ENCODE measurements at regions of chr12 and their contacts with region 1.

Region 1: GRCh38 chr12:95918194-95918993 is 24.0 kb downstream of the CCDC38 start:
- DNase-seq: peak in 3 of 6 donors; percentile 26 to 48 (median 28)
- ATAC-seq: peak; percentile 53 to 95 (median 92)
- H3K4me3 ChIP-seq: no peak overlapping the region
- H3K27ac ChIP-seq: no peak overlapping the region
- H3K4me1 ChIP-seq: no peaks in the 10 kb centered on the region
- H3K27me3 ChIP-seq: no peaks in the 10 kb centered on the region
- CTCF ChIP-seq: peak; percentile 57 to 80 (median 73)

Region 2: DNA sequence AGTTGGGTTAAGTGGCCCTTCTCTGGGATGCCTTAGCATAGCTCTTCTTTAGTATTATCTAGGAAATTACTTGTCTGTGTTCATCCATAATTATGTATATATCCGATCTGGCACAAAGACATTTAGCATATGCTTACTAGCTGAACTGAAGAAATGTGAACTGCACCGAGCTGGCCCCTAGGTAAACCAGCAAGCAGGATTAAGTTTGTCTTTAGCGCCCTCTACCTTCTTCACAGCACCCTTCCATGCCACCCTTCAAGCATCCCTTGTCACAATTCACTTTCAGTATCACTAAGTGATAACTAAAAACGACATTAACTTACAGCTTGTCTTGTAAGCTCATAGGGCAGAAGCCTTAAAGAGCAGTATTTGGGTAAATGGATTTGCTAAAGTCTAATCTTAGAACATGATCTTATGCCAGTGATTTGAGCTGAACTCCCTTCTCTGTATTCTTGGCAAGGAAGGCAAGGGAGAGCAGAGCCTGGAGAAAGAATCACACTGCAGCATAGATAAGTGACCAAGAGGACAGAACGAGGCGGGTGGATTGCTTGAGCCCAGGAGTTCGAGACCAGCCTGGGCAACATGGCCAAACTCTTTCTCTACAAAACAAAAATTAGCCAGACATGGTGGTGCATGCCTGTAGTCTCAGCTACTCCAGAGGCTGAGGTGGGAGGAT is 80.4 kb after region 1 on chr12:
- intact Hi-C with region 1: loop called in 2 of 3 experiments (anchors 5 to 10 kb)
- DNase-seq: peak in 3 of 6 donors; percentile 21 to 45 (median 45)
- ATAC-seq: peak; percentile 84 to 97 (median 92)
- H3K4me3 ChIP-seq: no peak overlapping the region
- H3K27ac ChIP-seq: no peak overlapping the region
- H3K4me1 ChIP-seq: no peaks in the 10 kb centered on the region
- H3K27me3 ChIP-seq: no peaks in the 10 kb centered on the region
- CTCF ChIP-seq: peak; percentile 39 to 55 (median 46)